Heart left ventricle (tissue), 16 donors: ENCODE measurements at regions of chr12 and their contacts with region 1.

Region 1: DNA sequence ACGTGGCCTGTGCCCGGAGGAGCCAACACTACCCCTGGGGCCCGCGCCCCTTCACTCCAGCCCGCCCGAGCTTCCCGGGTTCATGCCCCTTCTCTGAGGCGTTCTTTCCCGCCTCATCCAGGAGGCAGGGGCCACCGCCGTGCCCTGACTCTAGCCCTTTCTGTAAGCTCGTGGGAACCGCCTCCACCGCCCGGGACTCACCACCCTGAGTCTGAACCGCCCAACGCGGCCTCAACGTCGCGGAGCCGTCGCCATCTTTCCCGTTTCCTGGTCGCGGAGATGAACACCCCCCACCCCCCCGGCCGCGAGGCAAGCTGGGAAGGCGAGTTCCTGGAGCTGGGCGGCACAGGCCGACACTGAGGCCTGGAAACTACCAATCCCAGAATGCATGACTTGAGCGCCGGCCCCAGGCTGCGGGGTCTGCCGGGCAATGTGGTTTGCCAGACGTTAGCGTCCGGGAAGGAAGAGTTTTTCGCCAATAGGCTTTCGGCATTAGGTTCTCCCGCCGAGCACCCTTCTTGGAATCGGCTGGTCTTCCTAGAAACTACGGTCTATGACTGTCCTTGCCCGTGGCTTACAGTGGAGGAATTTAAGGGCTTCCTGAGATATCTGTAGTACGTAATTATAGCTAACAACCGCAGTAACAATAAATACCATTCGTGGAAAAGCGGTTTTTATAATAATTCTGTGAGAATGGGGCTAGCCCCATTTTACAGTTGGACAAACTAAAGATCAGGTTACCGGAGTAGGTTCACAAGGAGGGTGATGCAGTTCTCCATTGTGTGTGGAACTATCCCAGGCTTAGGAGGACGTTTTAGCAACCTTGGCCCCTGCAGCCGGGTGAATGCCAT is at the start of gene DDX23:
- DNase-seq: peak; percentile 95 to 97 (median 96)
- ATAC-seq: peak; percentile 98 to 99 (median 98)
- H3K4me3 ChIP-seq: peak within 1 kb of the TSS; percentile 74 to 99 (median 92)
- H3K27ac ChIP-seq: peak within 1 kb of the TSS; percentile 68 to 96 (median 84)
- H3K4me1 ChIP-seq: peaks cover 0 to 28% (median 21%) of the 10 kb centered on the region in 12 donors
- H3K27me3 ChIP-seq: no peaks in the 10 kb centered on the region
- CTCF ChIP-seq: no peak
- POLR2A ChIP-seq: peak in 1 of 2 donors; percentile 54
- total RNA-seq, gene DDX23: 25.3 to 51.2 (median 35.8) TPM

Region 2: DNA sequence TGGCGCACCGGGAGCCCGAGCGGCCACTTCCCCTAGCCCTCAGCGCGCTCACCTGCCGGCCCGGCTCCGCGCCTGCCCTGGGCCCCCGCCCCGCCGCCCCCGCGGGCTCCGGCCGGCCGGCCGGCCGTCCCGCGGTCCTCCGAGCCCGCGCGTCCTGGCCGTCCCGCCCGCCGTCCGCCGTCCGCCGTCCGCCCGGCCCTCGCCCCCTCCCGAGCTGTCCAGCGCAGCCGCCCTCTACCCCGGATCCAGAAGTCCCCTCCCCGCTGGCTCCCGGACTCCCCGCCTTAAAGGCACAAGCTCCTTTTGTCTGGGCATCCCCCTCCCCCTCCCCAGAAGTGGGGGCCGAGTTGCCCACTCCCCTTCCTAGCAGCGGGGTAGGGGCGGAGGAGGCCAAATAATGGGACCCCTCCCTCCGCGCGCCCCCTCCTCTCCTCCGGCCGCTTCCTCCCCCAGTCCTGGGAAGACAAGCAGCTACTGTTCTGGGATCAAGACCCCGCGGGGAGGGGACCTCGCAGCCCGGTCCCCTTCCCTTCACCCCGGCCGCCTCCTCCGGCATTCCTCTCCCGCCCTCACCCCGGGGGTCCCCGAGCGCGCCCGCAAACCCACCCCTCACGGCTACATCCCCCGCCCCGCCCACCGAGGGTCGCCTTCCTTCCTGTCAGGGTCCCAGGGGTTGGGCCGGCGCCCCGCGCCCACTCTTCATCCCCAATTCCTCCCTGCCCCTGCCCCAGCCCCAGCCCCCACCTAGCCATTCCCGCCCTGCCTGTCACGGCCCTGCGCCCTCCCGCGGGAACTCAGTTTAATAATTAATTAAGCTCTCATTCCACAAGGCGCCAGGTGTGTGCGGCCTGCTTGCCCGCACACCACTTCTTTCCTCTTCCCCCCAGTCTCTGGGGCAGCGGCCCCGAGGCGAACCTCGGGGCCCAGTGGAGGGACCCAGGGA is 63.0 kb before region 1 on chr12 and contains the start of gene ADCY6:
- intact Hi-C with region 1: no loop called
- DNase-seq: peak; percentile 88 to 92 (median 89)
- ATAC-seq: peak in 3 of 4 donors; percentile 66 to 67 (median 66)
- H3K4me3 ChIP-seq: peak within 1 kb of the TSS; percentile 72 to 100 (median 98)
- H3K27ac ChIP-seq: peak within 1 kb of the TSS; percentile 89 to 99 (median 94)
- H3K4me1 ChIP-seq: peaks cover 3 to 48% (median 34%) of the 10 kb centered on the region in 12 donors
- H3K27me3 ChIP-seq: peaks cover 0 to 14% (median 0%) of the 10 kb centered on the region in 9 donors
- CTCF ChIP-seq: peak in 1 of 12 donors; percentile 8
- POLR2A ChIP-seq: peak in 1 of 2 donors; percentile 46
- total RNA-seq, gene ADCY6: 88.4 to 145 (median 106) TPM

Region 3: DNA sequence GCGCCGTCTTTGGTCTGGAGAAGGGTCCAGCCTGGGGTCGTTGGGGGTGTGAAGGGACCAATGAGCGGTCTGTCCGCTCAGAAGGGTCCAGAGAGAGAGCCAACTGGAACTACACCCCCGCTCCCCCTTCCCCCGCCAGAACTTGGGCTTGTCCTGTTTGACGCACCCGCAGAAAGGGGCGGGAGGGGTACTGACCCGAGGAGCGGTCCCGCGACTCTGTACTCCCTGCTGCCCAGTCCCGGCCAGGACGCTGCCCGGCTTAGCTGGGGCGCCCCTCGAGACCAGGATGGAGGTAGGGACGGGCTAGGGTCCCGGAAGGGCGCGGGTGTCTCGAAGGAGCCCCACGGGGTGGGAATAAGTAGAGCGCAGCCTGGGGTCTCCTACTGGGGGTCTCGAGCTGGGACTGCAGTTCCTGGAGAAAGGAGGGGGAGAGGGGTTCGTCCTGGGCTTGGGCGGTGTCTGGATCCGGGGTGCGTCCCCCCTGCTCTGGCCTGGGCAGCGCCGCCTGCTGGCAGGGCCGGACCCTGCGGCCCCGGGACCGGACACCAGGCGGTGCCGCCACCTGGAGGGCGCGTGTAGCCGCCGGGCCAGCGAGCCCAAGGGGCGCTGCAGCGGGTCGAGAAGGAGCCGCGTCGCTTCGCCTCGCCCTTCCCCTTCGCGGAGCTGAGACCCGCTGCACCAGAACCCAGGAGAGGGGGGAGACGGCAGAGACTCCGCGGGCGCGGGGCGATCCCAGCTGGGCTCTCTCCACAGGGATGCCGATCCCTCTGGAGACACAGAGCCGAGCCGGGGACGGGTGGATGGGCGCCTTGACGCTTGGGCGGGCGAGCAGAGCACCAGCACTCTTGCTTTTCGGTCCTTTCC is 37.6 kb before region 1 on chr12:
- intact Hi-C with region 1: loop called in 1 of 10 experiments (anchors 2 kb)
- DNase-seq: peak; percentile 80 to 94 (median 84)
- ATAC-seq: peak; percentile 59 to 87 (median 84)
- H3K4me3 ChIP-seq: peak overlapping the region; percentile 62 to 89 (median 70)
- H3K27ac ChIP-seq: peak overlapping the region; percentile 65 to 92 (median 86)
- H3K4me1 ChIP-seq: peaks cover 2 to 46% (median 29%) of the 10 kb centered on the region in 12 donors
- H3K27me3 ChIP-seq: peaks cover 0 to 11% (median 0%) of the 10 kb centered on the region in 9 donors
- CTCF ChIP-seq: peak; percentile 95 to 100 (median 99)
- POLR2A ChIP-seq: peak in 1 of 2 donors; percentile 54

Region 4: GRCh38 chr12:48890657-48891418 is 38.7 kb after region 1 on chr12:
- intact Hi-C with region 1: loop called (anchors 1 to 2 kb)
- DNase-seq: peak; percentile 66 to 85 (median 74)
- ATAC-seq: peak; percentile 86 to 99 (median 98)
- H3K4me3 ChIP-seq: peak overlapping the region in 10 of 12 donors; percentile 11 to 50 (median 36)
- H3K27ac ChIP-seq: no peak overlapping the region
- H3K4me1 ChIP-seq: peaks cover 0 to 10% (median 7%) of the 10 kb centered on the region in 12 donors
- H3K27me3 ChIP-seq: peaks cover 0 to 16% (median 2%) of the 10 kb centered on the region in 9 donors
- CTCF ChIP-seq: peak; percentile 81 to 98 (median 94)
- POLR2A ChIP-seq: no peak

Region 5: GRCh38 chr12:48936379-48936979 is 84.4 kb after region 1 on chr12:
- intact Hi-C with region 1: loop called in 9 of 10 experiments (anchors 2 to 10 kb)
- DNase-seq: peak; percentile 56 to 77 (median 70)
- ATAC-seq: peak in 3 of 4 donors; percentile 56 to 74 (median 70)
- H3K4me3 ChIP-seq: no peak overlapping the region
- H3K27ac ChIP-seq: no peak overlapping the region
- H3K4me1 ChIP-seq: peaks cover 0 to 14% (median under 1%) of the 10 kb centered on the region in 12 donors
- H3K27me3 ChIP-seq: no peaks in the 10 kb centered on the region
- CTCF ChIP-seq: peak; percentile 69 to 96 (median 90)
- POLR2A ChIP-seq: no peak

Region 6: GRCh38 chr12:48973941-48974673 is 122.0 kb after region 1 on chr12:
- intact Hi-C with region 1: no loop called
- DNase-seq: peak in 3 of 5 donors; percentile 66 to 74 (median 68)
- ATAC-seq: peak; percentile 5 to 63 (median 55)
- H3K4me3 ChIP-seq: no peak overlapping the region
- H3K27ac ChIP-seq: no peak overlapping the region
- H3K4me1 ChIP-seq: peaks cover 7 to 54% (median 23%) of the 10 kb centered on the region in 12 donors
- H3K27me3 ChIP-seq: peaks cover 47 to 100% (median 94%) of the 10 kb centered on the region in 9 donors
- CTCF ChIP-seq: peak; percentile 29 to 68 (median 58)
- POLR2A ChIP-seq: no peak

Region 7: DNA sequence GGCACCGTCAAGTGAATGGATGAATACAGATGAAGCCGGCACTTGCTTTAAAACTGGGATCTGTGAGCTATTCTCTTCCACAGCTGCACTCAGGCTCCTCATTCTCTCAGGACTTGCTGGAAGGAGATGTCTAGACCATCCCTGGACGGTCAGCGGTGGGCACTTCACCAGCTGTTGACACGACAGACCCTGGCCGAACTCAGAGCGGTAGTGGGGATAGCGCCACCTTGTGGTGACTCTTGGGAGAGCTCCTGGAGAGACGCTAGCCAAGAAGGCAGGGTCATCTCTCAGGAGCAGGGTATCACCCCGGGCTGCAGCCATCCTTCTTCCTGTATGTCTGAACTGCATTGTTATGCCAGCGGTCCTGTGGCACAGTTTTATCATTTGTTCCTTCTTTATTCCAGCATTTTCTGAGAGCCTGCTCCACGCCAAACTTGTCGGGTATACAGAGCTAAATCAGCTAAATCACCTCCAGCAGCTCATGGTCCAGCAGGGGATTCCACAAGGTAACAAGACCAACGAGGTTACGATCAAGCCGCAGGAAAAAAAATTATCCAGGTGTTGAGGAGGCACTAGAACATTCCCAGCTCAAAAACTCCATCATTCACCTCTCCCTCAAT is 136.0 kb after region 1 on chr12:
- intact Hi-C with region 1: loop called in 3 of 10 experiments (anchors 5 to 10 kb)
- DNase-seq: peak in 4 of 5 donors; percentile 63 to 79 (median 66)
- ATAC-seq: peak; percentile 35 to 57 (median 49)
- H3K4me3 ChIP-seq: no peak overlapping the region
- H3K27ac ChIP-seq: no peak overlapping the region
- H3K4me1 ChIP-seq: peaks cover 0 to 17% (median 4%) of the 10 kb centered on the region in 12 donors
- H3K27me3 ChIP-seq: peaks cover 0 to 71% (median 8%) of the 10 kb centered on the region in 9 donors
- CTCF ChIP-seq: peak; percentile 67 to 92 (median 80)
- POLR2A ChIP-seq: no peak

Region 8: GRCh38 chr12:48995061-48995879 is 143.2 kb after region 1 on chr12:
- intact Hi-C with region 1: loop called in 5 of 10 experiments (anchors 1 to 5 kb)
- DNase-seq: peak; percentile 76 to 87 (median 85)
- ATAC-seq: peak; percentile 66 to 85 (median 72)
- H3K4me3 ChIP-seq: peak overlapping the region in 9 of 12 donors; percentile 19 to 50 (median 35)
- H3K27ac ChIP-seq: no peak overlapping the region
- H3K4me1 ChIP-seq: peaks cover 4 to 50% (median 35%) of the 10 kb centered on the region in 12 donors
- H3K27me3 ChIP-seq: peaks cover 3 to 72% (median 9%) of the 10 kb centered on the region in 9 donors
- CTCF ChIP-seq: peak; percentile 68 to 91 (median 84)
- POLR2A ChIP-seq: no peak